Caco-2 (cell line): ENCODE measurements at regions of chr14 and their contacts with region 1.

Region 1: DNA sequence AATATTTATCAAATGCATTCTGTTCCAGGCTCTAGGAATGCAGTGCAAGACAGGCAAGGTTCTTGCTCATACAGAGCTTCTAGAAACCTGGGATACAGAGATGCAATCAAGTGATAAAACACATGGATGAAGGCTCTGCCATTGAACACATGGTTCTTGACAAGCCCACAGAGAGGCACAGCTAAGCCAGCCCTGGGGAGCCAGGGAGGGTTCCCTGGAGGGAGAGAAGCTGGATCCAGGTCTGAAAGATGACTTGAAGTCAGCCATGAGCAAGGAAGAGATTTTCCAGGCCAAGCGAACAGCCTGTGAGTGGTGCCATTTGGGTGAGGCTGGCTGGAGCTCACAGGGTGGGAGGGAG is 66.2 kb downstream of the IRF2BPL start:
- DNase-seq: no peak
- H3K4me3 ChIP-seq: peak overlapping the region; percentile 24
- H3K4me3 Mint-ChIP-seq: peak overlapping the region; percentile 88
- H3K27ac Mint-ChIP-seq: peak overlapping the region; percentile 84
- H3K4me1 ChIP-seq: peaks cover 25% of the 10 kb centered on the region
- H3K4me1 Mint-ChIP-seq: peaks cover 20% of the 10 kb centered on the region
- H3K27me3 ChIP-seq: no peaks in the 10 kb centered on the region
- H3K27me3 Mint-ChIP-seq: no peaks in the 10 kb centered on the region
- CTCF ChIP-seq: no peak

Region 2: GRCh38 chr14:77000340-77001270 is 38.3 kb after region 1 on chr14:
- CTCF ChIA-PET with region 1: no interaction called
- POLR2A ChIA-PET with region 1: no interaction called
- intact Hi-C with region 1: loop called (anchors 5 kb)
- DNase-seq: no peak
- H3K4me3 ChIP-seq: no peak overlapping the region
- H3K4me3 Mint-ChIP-seq: no peak overlapping the region
- H3K27ac Mint-ChIP-seq: peak overlapping the region; percentile 34
- H3K4me1 ChIP-seq: peaks cover 44% of the 10 kb centered on the region
- H3K4me1 Mint-ChIP-seq: peaks cover 32% of the 10 kb centered on the region
- H3K27me3 ChIP-seq: no peaks in the 10 kb centered on the region
- H3K27me3 Mint-ChIP-seq: no peaks in the 10 kb centered on the region
- CTCF ChIP-seq: no peak